ENCODE measurements at regions of chr16 and their contacts with region 1.

Region 1: GRCh38 chr16:49491771-49492761 is 118.5 kb downstream of the C16orf78 start:
- DNase-seq: peak; percentile 44 to 80 (median 53)
- ATAC-seq: peak; percentile 55 to 88 (median 73)
- H3K4me3 ChIP-seq: peak overlapping the region in 11 of 12 donors; percentile 0 to 56 (median 46)
- H3K27ac ChIP-seq: peak overlapping the region in 6 of 12 donors; percentile 2 to 67 (median 42)
- H3K4me1 ChIP-seq: peaks cover 0 to 17% (median 7%) of the 10 kb centered on the region in 12 donors
- H3K27me3 ChIP-seq: no peaks in the 10 kb centered on the region
- CTCF ChIP-seq: peak in 11 of 12 donors; percentile 92 to 98 (median 96)
- POLR2A ChIP-seq: peak in 1 of 2 donors; percentile 12

Region 2: GRCh38 chr16:49407873-49408550 is 84.1 kb before region 1 on chr16:
- intact Hi-C with region 1: loop called in 3 of 10 experiments (anchors 5 to 10 kb)
- DNase-seq: peak; percentile 81 to 90 (median 87)
- ATAC-seq: peak; percentile 95 to 99 (median 98)
- H3K4me3 ChIP-seq: no peak overlapping the region
- H3K27ac ChIP-seq: no peak overlapping the region
- H3K4me1 ChIP-seq: peaks cover 0 to 7% (median 0%) of the 10 kb centered on the region in 12 donors
- H3K27me3 ChIP-seq: no peaks in the 10 kb centered on the region
- CTCF ChIP-seq: peak; percentile 85 to 94 (median 91)
- POLR2A ChIP-seq: no peak

Region 3: DNA sequence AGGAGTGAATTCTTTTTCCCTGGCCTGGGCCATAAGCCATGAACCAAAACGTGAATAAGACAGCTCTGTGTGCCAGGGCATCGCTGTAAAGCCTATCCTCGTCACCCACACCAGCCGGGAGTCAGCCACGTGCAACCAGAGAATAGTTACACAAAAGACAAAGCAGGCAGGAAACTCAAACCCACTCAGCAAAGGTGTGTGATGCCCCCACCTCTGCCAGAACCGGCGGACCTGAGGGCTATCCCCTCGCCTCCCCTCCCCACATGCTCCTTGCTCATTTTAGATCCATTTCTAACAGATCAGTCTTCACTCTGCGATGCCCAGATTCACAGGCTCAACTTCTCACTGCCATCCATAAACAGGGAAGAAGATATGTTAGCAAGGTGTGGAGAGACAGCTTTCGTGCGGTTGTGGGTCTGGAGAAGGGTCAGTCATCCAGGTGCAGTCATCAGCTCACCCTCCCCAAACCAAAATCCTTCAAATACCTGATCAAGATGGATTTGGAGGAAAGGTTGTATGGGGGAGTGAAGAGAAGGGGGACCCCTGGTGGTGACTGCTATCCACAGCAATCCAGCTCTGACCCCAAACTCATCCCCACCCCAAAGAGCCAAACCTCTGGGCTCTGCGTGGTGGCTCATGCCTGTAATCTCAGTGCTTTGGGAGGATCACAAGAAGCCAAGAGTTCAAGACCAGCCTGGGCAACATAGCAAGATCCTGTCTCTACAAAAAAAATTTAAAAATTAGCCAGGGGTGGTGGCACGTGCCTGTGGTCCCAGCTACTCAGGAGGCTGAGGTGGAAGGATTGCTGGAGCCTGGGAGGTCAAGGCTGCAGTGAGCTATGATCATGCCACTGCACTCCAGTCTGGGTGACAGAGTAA is 100.7 kb after region 1 on chr16:
- intact Hi-C with region 1: loop called in 8 of 10 experiments (anchors 5 to 10 kb)
- DNase-seq: peak in 1 of 5 donors; percentile 28
- ATAC-seq: peak in 3 of 4 donors; percentile 49 to 58 (median 56)
- H3K4me3 ChIP-seq: no peak overlapping the region
- H3K27ac ChIP-seq: no peak overlapping the region
- H3K4me1 ChIP-seq: peaks cover 0 to 28% (median 11%) of the 10 kb centered on the region in 12 donors
- H3K27me3 ChIP-seq: peaks cover 0 to 2% (median 0%) of the 10 kb centered on the region in 9 donors
- CTCF ChIP-seq: peak; percentile 63 to 84 (median 75)
- POLR2A ChIP-seq: no peak

Region 4: DNA sequence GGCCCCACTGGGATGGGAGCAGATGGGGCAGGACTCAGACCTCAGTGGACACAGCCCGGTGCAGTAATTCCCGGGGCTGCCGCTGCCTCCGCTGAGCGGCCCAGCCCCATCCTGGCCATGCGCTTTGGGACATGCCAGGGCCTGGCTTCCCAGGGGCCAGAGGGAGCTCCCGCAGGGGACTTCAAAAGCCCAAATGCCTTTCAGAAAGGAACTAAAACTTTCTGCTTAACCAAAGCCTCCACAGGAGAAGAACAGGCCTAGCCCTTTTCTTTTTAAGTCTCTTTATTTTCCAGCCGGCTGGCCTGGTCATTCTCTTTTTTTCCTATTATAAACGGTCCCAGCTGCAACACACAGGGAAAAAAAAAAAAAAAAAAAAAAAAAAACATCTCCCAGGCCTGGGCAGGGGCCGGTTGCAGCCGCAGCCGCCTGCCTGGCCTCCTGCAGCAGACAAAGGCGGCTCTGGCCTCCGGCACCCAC is 374.6 kb after region 1 on chr16:
- intact Hi-C with region 1: loop called in 3 of 10 experiments (anchors 10 kb)
- DNase-seq: no peak
- ATAC-seq: peak in 2 of 4 donors; percentile 20 to 26
- H3K4me3 ChIP-seq: no peak overlapping the region
- H3K27ac ChIP-seq: peak overlapping the region in 6 of 12 donors; percentile 17 to 47 (median 30)
- H3K4me1 ChIP-seq: peaks cover 0 to 14% (median 1%) of the 10 kb centered on the region in 12 donors
- H3K27me3 ChIP-seq: no peaks in the 10 kb centered on the region
- CTCF ChIP-seq: no peak
- POLR2A ChIP-seq: no peak

Region 5: GRCh38 chr16:49884033-49885015 is 392.3 kb after region 1 on chr16:
- intact Hi-C with region 1: loop called in 4 of 10 experiments (anchors 5 to 10 kb)
- DNase-seq: no peak
- ATAC-seq: no peak
- H3K4me3 ChIP-seq: no peak overlapping the region
- H3K27ac ChIP-seq: no peak overlapping the region
- H3K4me1 ChIP-seq: no peaks in the 10 kb centered on the region
- H3K27me3 ChIP-seq: peaks cover 0 to 18% (median 0%) of the 10 kb centered on the region in 9 donors
- CTCF ChIP-seq: no peak
- POLR2A ChIP-seq: no peak